ENCODE measurements at regions of chr16 and their contacts with region 1.

Region 1: GRCh38 chr16:87387942-87388817 is 4.0 kb upstream of the MAP1LC3B start:
- DNase-seq: peak; percentile 94
- H3K4me3 ChIP-seq: peak overlapping the region in 1 of 4 donors; percentile 17
- H3K27ac ChIP-seq: peak overlapping the region; percentile 86 to 98 (median 92)
- H3K4me1 ChIP-seq: peaks cover 19 to 52% (median 37%) of the 10 kb centered on the region in 4 donors
- H3K27me3 ChIP-seq: no peaks in the 10 kb centered on the region
- CTCF ChIP-seq: no peak
- EP300 ChIP-seq: peak; percentile 74
- POLR2A ChIP-seq: peak; percentile 69

Region 2: GRCh38 chr16:87316923-87317749 is 71.0 kb before region 1 on chr16 and contains the start of gene C16orf95:
- in situ Hi-C with region 1: loop called in 1 of 4 experiments (anchors 10 kb)
- intact Hi-C with region 1: loop called (anchors 5 kb)
- DNase-seq: peak; percentile 97
- H3K4me3 ChIP-seq: peak within 1 kb of the TSS; percentile 80 to 98 (median 89)
- H3K27ac ChIP-seq: peak within 1 kb of the TSS; percentile 96 to 98 (median 96)
- H3K4me1 ChIP-seq: peaks cover 7 to 11% (median 9%) of the 10 kb centered on the region in 4 donors
- H3K27me3 ChIP-seq: no peaks in the 10 kb centered on the region
- CTCF ChIP-seq: peak; percentile 55 to 83 (median 66)
- EP300 ChIP-seq: no peak
- POLR2A ChIP-seq: peak; percentile 95
- total RNA-seq, gene C16orf95: 1.1 to 2.3 TPM in 2 of 4 donors, not detected in the others

Region 3: DNA sequence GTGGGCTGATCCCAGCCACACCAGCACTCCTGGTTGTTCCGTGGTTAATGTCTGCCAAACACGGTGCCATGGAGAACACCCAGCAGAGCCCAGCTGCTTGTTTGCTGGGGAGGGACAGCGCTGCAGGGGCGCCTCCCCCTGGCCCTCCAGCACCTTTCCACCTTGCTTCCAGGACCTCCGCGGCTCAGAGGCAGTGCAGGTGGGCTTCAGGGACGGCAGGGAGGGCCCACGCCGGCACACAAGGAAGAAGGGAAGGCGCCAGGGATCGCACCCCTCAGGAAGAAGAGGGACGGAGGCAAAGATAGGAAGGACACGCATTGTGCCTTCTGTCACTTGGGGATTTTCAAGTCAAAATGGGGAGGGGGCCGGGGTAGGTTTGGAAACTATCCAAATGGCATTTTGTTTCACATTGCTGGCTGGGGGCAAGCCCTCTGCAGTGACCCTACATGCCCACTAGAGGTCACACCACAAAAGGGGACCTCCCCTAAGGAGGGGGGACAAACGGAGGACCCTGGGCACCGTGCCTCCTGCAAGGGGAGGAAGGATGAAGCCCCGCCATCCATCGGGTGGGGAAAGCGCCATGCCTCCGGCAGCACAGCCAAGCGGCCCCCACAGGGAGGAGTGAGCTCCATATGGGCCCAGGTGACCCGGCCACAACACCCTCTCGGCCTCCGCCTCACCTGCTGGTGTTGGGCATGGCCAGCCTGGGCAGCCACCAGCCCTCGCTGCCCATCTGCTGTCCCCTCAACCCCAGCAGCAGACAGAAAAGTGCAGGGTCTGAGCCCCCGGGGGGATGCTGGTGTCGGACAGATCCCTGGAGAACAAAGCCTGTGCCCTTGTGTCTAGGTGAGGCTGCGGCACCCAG is 63.5 kb before region 1 on chr16:
- in situ Hi-C with region 1: loop called in 1 of 4 experiments (anchors 10 kb)
- intact Hi-C with region 1: loop called (anchors 5 kb)
- DNase-seq: peak; percentile 30
- H3K4me3 ChIP-seq: no peak overlapping the region
- H3K27ac ChIP-seq: peak overlapping the region in 1 of 4 donors; percentile 10
- H3K4me1 ChIP-seq: peaks cover 0 to 6% (median 3%) of the 10 kb centered on the region in 4 donors
- H3K27me3 ChIP-seq: no peaks in the 10 kb centered on the region
- CTCF ChIP-seq: peak; percentile 68 to 82 (median 80)
- EP300 ChIP-seq: no peak
- POLR2A ChIP-seq: no peak

Region 4: GRCh38 chr16:87636072-87636684 is 248.0 kb after region 1 on chr16:
- in situ Hi-C with region 1: loop called in 1 of 4 experiments (anchors 10 kb)
- intact Hi-C with region 1: no loop called
- DNase-seq: peak; percentile 84
- H3K4me3 ChIP-seq: peak overlapping the region in 2 of 4 donors; percentile 13 to 20
- H3K27ac ChIP-seq: no peak overlapping the region
- H3K4me1 ChIP-seq: peaks cover 8 to 18% (median 12%) of the 10 kb centered on the region in 4 donors
- H3K27me3 ChIP-seq: peaks cover 32% of the 10 kb centered on the region
- CTCF ChIP-seq: peak; percentile 39 to 63 (median 60)
- EP300 ChIP-seq: no peak
- POLR2A ChIP-seq: no peak

Region 5: GRCh38 chr16:87860553-87861299 is 472.5 kb after region 1 on chr16:
- in situ Hi-C with region 1: no loop called
- intact Hi-C with region 1: loop called (anchors 5 kb)
- DNase-seq: no peak
- H3K4me3 ChIP-seq: no peak overlapping the region
- H3K27ac ChIP-seq: peak overlapping the region; percentile 59 to 94 (median 76)
- H3K4me1 ChIP-seq: peaks cover 10 to 33% (median 20%) of the 10 kb centered on the region in 4 donors
- H3K27me3 ChIP-seq: no peaks in the 10 kb centered on the region
- CTCF ChIP-seq: no peak
- EP300 ChIP-seq: no peak
- POLR2A ChIP-seq: no peak

Measured in transverse colon (tissue), 4 donors.